ENCODE measurements at regions of chr19 and their contacts with region 1.

Region 1: DNA sequence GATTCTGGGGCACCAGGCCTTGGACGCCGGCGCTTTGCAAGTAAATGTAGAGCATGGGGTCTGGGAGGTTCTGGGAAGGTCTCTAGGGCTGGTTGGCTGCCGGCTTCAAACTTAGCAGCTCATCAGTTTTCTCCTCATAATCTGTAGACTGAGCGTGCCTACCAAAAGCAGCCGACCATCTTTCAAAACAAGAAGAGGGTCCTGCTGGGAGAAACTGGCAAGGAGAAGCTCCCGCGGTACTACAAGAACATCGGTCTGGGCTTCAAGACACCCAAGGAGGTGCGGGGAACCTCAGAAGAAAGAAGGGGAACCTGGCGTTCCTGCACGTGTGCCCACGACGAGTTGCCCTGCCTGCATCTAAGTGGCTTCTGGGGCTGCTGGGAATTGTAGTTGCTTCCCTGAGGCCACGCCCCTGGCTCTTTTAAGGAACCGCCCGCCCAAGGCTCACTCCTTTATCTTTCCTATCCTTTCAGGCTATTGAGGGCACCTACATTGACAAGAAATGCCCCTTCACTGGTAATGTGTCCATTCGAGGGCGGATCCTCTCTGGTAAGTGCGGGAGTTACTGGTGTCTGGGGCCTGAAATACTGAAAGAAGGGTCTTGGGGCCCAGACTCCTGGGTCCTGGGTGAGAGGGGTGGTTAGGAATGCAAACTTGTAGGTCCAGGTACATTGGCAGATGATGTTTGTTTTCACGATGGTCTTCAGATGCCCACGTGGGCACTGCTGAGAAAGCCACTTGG is 984 bp downstream of the RPS11 start:
- DNase-seq: no peak
- H3K4me3 ChIP-seq: peak overlapping the region; percentile 91 to 99 (median 98)
- H3K27ac ChIP-seq: peak overlapping the region; percentile 85
- H3K4me1 ChIP-seq: peaks cover 0 to 32% (median 23%) of the 10 kb centered on the region in 4 experiments; a peak in 6 of 7 replicates
- H3K27me3 ChIP-seq: no peaks in the 10 kb centered on the region
- CTCF ChIP-seq: no peak
- EP300 ChIP-seq: no peak
- POLR2A ChIP-seq: peak in 1 of 2 experiments; percentile 77; a peak in 2 of 3 replicates
- RAD21 ChIP-seq: no peak

Region 2: DNA sequence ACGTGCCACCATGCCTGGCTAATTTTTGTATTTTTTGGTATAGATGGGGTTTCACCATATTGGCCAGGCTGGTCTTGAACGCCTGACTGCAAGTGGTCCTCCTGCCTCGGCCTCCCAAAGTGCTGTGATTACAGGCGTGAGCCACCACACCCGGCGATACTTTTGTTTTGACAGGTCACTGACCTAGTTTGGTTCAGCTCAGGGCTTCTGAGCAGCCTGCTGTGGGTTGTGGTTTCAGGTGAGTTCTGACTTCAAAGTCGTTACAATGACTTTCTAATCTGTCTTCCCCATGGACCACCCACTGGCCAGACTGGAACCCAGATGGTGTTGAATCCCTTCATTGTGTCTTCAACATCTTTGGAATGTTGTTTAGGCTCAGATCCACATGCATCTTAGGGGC is 265.8 kb before region 1 on chr19:
- CTCF ChIA-PET with region 1: no interaction called
- POLR2A ChIA-PET with region 1: no interaction called
- DNase-seq: no peak
- H3K4me3 ChIP-seq: no peak overlapping the region
- H3K27ac ChIP-seq: no peak overlapping the region
- H3K4me1 ChIP-seq: no peaks in the 10 kb centered on the region
- H3K27me3 ChIP-seq: no peaks in the 10 kb centered on the region
- CTCF ChIP-seq: no peak
- EP300 ChIP-seq: no peak
- POLR2A ChIP-seq: no peak
- RAD21 ChIP-seq: no peak

Region 3: DNA sequence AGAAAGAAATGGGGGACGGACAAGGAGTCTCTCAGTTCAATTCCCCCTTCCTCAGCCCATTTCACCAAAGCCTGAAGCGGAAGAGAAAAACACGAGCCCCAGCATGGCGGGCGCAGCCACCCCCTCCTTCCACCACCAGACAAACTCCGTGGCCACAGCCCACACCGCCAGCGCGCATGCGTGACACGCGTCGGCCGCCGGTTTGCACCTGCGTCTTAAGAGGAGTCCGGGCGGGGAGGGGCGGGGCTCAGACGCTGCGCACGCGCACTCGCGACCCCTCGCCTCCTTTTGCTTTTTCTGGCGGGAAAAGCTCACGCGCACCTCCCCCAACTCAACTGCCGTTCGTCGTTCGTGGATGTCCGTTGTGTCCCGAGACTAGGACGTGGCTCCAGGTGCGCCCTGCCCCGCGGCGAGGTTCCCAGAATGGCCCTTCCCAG is 109.3 kb before region 1 on chr19 and contains the start of gene KASH5:
- CTCF ChIA-PET with region 1: no interaction called
- POLR2A ChIA-PET with region 1: no interaction called
- DNase-seq: no peak
- H3K4me3 ChIP-seq: no peak within 1 kb of the TSS
- H3K27ac ChIP-seq: no peak within 1 kb of the TSS
- H3K4me1 ChIP-seq: no peaks in the 10 kb centered on the region; a peak in 2 of 7 replicates
- H3K27me3 ChIP-seq: no peaks in the 10 kb centered on the region
- CTCF ChIP-seq: no peak
- EP300 ChIP-seq: no peak
- POLR2A ChIP-seq: no peak
- RAD21 ChIP-seq: no peak
- total RNA-seq, gene KASH5: 0.19 and 0.57 TPM in 2 replicates

Region 4: GRCh38 chr19:49427855-49428546 is 69.2 kb before region 1 on chr19:
- CTCF ChIA-PET with region 1: no interaction called
- POLR2A ChIA-PET with region 1: no interaction called
- DNase-seq: peak in 1 of 2 experiments; percentile 87
- H3K4me3 ChIP-seq: peak overlapping the region; percentile 49 to 71 (median 54)
- H3K27ac ChIP-seq: peak overlapping the region; percentile 26; the same call in 1 of the 2 replicates
- H3K4me1 ChIP-seq: peaks cover 4 to 39% (median 22%) of the 10 kb centered on the region in 4 experiments
- H3K27me3 ChIP-seq: peaks cover 11 to 55% (median 51%) of the 10 kb centered on the region in 4 experiments
- CTCF ChIP-seq: no peak
- EP300 ChIP-seq: no peak
- POLR2A ChIP-seq: peak in 1 of 2 experiments; percentile 32; a peak in 1 of 3 replicates
- RAD21 ChIP-seq: no peak

Region 5: GRCh38 chr19:49451430-49452181 is 45.6 kb before region 1 on chr19 and contains the start of gene PIH1D1:
- CTCF ChIA-PET with region 1: no interaction called
- POLR2A ChIA-PET with region 1: interaction called, 11 read pairs
- DNase-seq: peak; percentile 93 to 95
- H3K4me3 ChIP-seq: peak within 1 kb of the TSS; percentile 86 to 99 (median 96)
- H3K27ac ChIP-seq: peak within 1 kb of the TSS; percentile 69
- H3K4me1 ChIP-seq: peaks cover 0 to 14% (median 10%) of the 10 kb centered on the region in 4 experiments; a peak in 6 of 7 replicates
- H3K27me3 ChIP-seq: no peaks in the 10 kb centered on the region
- CTCF ChIP-seq: no peak
- EP300 ChIP-seq: no peak
- POLR2A ChIP-seq: peak; percentile 51 to 86
- RAD21 ChIP-seq: no peak
- total RNA-seq, gene PIH1D1: 146 and 155 TPM in 2 replicates

Region 6: GRCh38 chr19:49468746-49469447 is 28.3 kb before region 1 on chr19:
- CTCF ChIA-PET with region 1: interaction called, 3 read pairs
- POLR2A ChIA-PET with region 1: interaction called, 50 read pairs
- DNase-seq: peak in 1 of 2 experiments; percentile 79
- H3K4me3 ChIP-seq: no peak overlapping the region
- H3K27ac ChIP-seq: peak overlapping the region; percentile 36; the same call in 1 of the 2 replicates
- H3K4me1 ChIP-seq: peaks cover 0 to 8% (median 3%) of the 10 kb centered on the region in 4 experiments; a peak in 6 of 7 replicates
- H3K27me3 ChIP-seq: no peaks in the 10 kb centered on the region
- CTCF ChIP-seq: no peak
- EP300 ChIP-seq: no peak
- POLR2A ChIP-seq: no peak
- RAD21 ChIP-seq: no peak

Region 7: GRCh38 chr19:49473868-49474544 is 23.2 kb before region 1 on chr19 and contains the start of gene FLT3LG:
- CTCF ChIA-PET with region 1: interaction called, 10 read pairs
- POLR2A ChIA-PET with region 1: interaction called, 138 read pairs
- DNase-seq: peak in 1 of 2 experiments; percentile 90
- H3K4me3 ChIP-seq: peak within 1 kb of the TSS in 2 of 4 experiments; percentile 10 to 58; a peak in 3 of 8 replicates
- H3K27ac ChIP-seq: no peak within 1 kb of the TSS
- H3K4me1 ChIP-seq: peaks cover 0 to 5% (median under 1%) of the 10 kb centered on the region in 4 experiments; a peak in 3 of 7 replicates
- H3K27me3 ChIP-seq: peaks cover 0 to 5% (median 0%) of the 10 kb centered on the region in 4 experiments; a peak in 4 of 7 replicates
- CTCF ChIP-seq: peak; percentile 86 to 92 (median 88)
- EP300 ChIP-seq: no peak
- POLR2A ChIP-seq: no peak
- RAD21 ChIP-seq: peak; percentile 36 to 49; a peak in 3 of 4 replicates
- total RNA-seq, gene FLT3LG: 1.6 and 2.6 TPM in 2 replicates

Region 8: DNA sequence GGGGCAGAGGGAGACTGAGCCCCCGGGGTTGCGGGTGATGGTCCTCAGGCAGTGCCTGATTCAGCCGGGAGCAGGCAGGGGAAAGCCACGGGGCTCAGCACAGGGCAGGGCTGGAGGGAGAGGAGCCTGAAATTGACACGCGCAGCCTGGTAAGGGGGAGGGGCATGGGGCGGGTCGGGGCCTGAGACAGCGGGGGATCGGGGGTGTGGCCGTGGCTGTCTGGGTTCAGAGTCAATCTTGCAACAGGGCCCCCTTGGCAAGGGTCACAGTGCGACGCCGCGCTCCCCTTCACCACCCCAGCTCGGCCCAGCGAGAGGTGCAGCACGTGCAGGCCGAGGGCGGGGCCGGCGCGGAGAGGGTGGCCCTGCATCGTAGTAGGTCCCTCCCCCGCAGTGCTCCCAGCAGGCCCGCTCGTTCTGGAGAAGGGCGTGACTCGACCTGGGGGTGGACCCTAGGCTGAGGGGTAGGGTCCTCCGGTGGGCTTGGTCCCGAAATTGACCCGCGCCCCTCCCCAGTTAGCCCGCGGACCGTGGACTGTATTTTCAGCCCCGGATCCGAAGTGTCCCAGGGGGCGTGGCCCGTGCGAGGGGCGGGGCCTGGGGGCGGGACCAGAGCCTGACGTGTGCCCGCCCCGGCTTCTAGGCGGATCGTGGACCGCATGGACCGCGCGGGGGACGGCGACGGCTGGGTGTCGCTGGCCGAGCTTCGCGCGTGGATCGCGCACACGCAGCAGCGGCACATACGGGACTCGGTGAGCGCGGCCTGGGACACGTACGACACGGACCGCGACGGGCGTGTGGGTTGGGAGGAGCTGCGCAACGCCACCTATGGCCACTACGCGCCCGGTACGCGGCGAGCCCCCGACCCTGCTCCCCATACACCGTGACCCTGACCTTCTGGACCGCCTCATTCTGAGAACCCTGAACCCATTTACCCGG is 36.6 kb after region 1 on chr19:
- CTCF ChIA-PET with region 1: interaction called, 4 read pairs
- POLR2A ChIA-PET with region 1: interaction called, 11 read pairs
- DNase-seq: peak in 1 of 2 experiments; percentile 96
- H3K4me3 ChIP-seq: peak overlapping the region; percentile 60 to 81 (median 72)
- H3K27ac ChIP-seq: no peak overlapping the region
- H3K4me1 ChIP-seq: peaks cover 0 to 9% (median 1%) of the 10 kb centered on the region in 4 experiments; a peak in 5 of 7 replicates
- H3K27me3 ChIP-seq: no peaks in the 10 kb centered on the region; a peak in 1 of 7 replicates
- CTCF ChIP-seq: peak; percentile 22 to 76 (median 53)
- EP300 ChIP-seq: no peak
- POLR2A ChIP-seq: no peak
- RAD21 ChIP-seq: no peak

Region 9: GRCh38 chr19:49580264-49581006 is 83.2 kb after region 1 on chr19 and contains the start of gene NOSIP:
- CTCF ChIA-PET with region 1: no interaction called
- POLR2A ChIA-PET with region 1: interaction called, 16 read pairs
- DNase-seq: peak; percentile 89 to 95
- H3K4me3 ChIP-seq: peak within 1 kb of the TSS; percentile 87 to 99 (median 92)
- H3K27ac ChIP-seq: peak within 1 kb of the TSS; percentile 51
- H3K4me1 ChIP-seq: peaks cover 2 to 19% (median 8%) of the 10 kb centered on the region in 4 experiments
- H3K27me3 ChIP-seq: no peaks in the 10 kb centered on the region
- CTCF ChIP-seq: no peak
- EP300 ChIP-seq: 0 out of 3 replicates have a peak, but pooled peaks of 1 of the 2 experiments have one; percentile 47
- POLR2A ChIP-seq: peak; percentile 95 to 99
- RAD21 ChIP-seq: no peak
- total RNA-seq, gene NOSIP: 85.1 and 93.8 TPM in 2 replicates

Region 10: GRCh38 chr19:49590071-49590970 is 93.1 kb after region 1 on chr19:
- CTCF ChIA-PET with region 1: interaction called, 4 read pairs
- POLR2A ChIA-PET with region 1: interaction called, 12 read pairs
- DNase-seq: peak; percentile 98 to 99
- H3K4me3 ChIP-seq: peak overlapping the region; percentile 83 to 100 (median 93)
- H3K27ac ChIP-seq: peak overlapping the region; percentile 84
- H3K4me1 ChIP-seq: peaks cover 4 to 10% (median 5%) of the 10 kb centered on the region in 4 experiments; a peak in 6 of 7 replicates
- H3K27me3 ChIP-seq: no peaks in the 10 kb centered on the region
- CTCF ChIP-seq: peak in 1 of 3 experiments; percentile 8; a peak in 1 of 4 replicates
- EP300 ChIP-seq: no peak
- POLR2A ChIP-seq: peak; percentile 81 to 90
- RAD21 ChIP-seq: no peak

Region 11: DNA sequence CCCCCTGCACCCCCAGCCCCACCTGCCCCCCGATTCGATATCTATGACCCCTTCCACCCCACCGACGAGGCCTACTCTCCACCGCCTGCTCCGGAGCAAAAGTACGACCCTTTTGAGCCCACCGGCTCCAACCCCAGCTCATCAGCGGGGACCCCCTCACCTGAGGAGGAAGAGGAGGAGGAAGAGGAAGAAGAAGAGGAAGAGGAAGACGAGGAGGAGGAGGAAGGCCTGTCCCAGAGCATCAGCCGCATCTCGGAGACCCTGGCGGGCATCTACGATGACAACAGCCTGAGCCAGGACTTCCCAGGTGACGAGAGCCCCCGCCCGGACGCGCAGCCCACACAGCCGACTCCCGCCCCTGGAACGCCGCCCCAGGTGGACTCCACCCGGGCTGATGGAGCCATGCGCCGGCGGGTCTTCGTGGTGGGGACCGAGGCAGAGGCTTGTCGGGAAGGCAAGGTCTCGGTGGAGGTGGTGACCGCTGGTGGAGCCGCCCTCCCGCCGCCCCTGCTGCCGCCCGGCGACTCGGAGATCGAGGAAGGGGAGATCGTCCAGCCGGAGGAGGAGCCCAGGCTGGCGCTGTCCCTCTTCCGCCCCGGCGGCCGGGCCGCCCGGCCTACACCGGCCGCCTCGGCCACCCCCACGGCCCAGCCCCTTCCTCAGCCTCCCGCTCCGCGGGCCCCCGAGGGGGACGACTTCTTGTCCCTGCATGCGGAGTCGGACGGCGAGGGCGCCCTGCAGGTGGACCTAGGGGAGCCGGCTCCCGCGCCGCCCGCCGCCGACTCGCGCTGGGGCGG is 154.0 kb after region 1 on chr19:
- CTCF ChIA-PET with region 1: no interaction called
- POLR2A ChIA-PET with region 1: no interaction called
- DNase-seq: no peak
- H3K4me3 ChIP-seq: no peak overlapping the region
- H3K27ac ChIP-seq: no peak overlapping the region
- H3K4me1 ChIP-seq: peaks cover 0 to 3% (median under 1%) of the 10 kb centered on the region in 4 experiments; a peak in 2 of 7 replicates
- H3K27me3 ChIP-seq: no peaks in the 10 kb centered on the region
- CTCF ChIP-seq: no peak
- EP300 ChIP-seq: no peak
- POLR2A ChIP-seq: no peak
- RAD21 ChIP-seq: no peak